ENCODE measurements at regions of chr6 and their contacts with region 1.

Region 1: DNA sequence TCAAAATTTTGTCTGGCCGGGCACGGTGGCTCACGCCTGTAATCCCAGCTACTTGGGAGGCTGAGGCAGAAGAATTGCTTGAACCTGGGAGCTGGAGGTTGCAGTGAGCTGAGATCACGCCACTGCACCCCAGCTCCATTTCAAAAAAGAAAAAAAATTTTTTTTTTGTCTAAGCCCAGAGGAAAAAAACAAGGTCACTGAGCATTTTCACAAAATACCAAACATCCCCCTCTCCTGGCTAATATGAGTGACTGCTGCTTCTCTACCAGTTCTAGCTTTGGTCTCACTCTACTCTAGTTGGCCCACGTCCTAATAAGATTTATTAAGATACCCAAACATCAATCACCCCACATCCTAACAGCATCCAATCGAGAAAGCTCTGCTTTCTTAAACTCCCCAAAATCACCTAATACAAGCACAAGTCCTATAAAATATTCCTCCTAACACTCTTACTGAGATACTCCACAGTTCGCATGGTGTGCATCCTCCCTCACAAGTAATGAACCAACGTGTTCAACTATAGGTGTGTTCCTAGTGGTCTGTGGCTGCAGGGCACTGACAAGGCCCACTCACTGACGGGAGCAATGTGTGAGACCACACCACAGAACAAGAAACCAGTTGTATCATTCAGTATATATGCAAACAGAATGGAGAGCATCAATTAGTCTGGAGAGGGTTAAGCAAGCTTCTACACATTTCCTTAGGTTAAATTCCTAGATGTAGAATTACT is 64.2 kb downstream of the FKBP5 start:
- DNase-seq: no peak
- H3K4me3 ChIP-seq: no peak overlapping the region
- H3K27ac ChIP-seq: peak overlapping the region in 2 of 4 donors; percentile 7 to 42
- H3K4me1 ChIP-seq: peaks cover 0 to 6% (median 0%) of the 10 kb centered on the region in 4 donors
- H3K27me3 ChIP-seq: no peaks in the 10 kb centered on the region
- CTCF ChIP-seq: no peak
- EP300 ChIP-seq: no peak
- POLR2A ChIP-seq: no peak

Region 2: GRCh38 chr6:35419417-35419816 is 205.1 kb before region 1 on chr6:
- intact Hi-C with region 1: no loop called
- DNase-seq: no peak
- H3K4me3 ChIP-seq: no peak overlapping the region
- H3K27ac ChIP-seq: no peak overlapping the region
- H3K4me1 ChIP-seq: peaks cover 0 to 12% (median 9%) of the 10 kb centered on the region in 4 donors
- H3K27me3 ChIP-seq: no peaks in the 10 kb centered on the region
- CTCF ChIP-seq: no peak
- EP300 ChIP-seq: no peak
- POLR2A ChIP-seq: no peak

Region 3: DNA sequence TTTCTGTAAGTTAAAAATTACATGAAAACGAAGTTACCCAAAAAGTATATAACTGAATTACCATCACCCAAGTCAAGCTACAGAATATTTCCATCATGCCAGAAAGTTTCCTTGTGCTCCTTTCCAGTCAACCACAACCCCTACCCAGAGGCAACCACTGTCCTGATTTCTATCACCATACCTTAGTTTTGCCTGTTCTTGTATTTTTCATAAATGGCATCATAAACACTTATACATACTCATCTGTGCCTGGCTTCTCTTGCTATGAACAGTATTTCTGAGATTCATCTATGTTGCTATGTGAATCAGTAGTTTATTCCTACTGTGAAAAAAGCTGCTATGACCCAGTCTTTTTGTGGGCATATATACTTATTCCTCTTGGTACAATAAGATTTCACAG is 56.8 kb after region 1 on chr6:
- intact Hi-C with region 1: loop called (anchors 5 kb)
- DNase-seq: no peak
- H3K4me3 ChIP-seq: no peak overlapping the region
- H3K27ac ChIP-seq: no peak overlapping the region
- H3K4me1 ChIP-seq: peaks cover 0 to 66% (median 56%) of the 10 kb centered on the region in 4 donors
- H3K27me3 ChIP-seq: no peaks in the 10 kb centered on the region
- CTCF ChIP-seq: no peak
- EP300 ChIP-seq: no peak
- POLR2A ChIP-seq: no peak

Region 4: GRCh38 chr6:35694462-35694861 is 70.0 kb after region 1 on chr6:
- intact Hi-C with region 1: no loop called
- DNase-seq: no peak
- H3K4me3 ChIP-seq: no peak overlapping the region
- H3K27ac ChIP-seq: no peak overlapping the region
- H3K4me1 ChIP-seq: peaks cover 0 to 26% (median 24%) of the 10 kb centered on the region in 4 donors
- H3K27me3 ChIP-seq: no peaks in the 10 kb centered on the region
- CTCF ChIP-seq: no peak
- EP300 ChIP-seq: no peak
- POLR2A ChIP-seq: no peak

Region 5: DNA sequence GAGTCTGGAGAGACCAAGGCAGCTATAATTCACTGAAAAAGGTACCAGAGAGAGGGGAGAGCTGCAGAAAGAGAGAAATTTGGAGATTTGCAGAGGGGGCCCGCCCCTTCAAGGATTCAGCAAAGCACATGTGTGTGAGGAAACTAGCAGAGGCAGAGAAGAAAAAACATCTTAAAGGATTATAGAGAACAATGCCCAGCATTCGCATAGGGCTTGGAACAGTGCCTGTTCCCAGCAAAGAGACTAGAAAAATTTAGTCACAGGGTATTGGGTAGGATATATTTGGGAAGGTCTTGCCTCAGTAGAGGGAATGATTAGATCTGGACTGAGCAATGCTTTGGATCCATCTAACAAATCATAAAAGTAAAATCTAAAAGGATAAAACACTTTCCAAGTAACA is 252.4 kb after region 1 on chr6:
- intact Hi-C with region 1: no loop called
- DNase-seq: no peak
- H3K4me3 ChIP-seq: no peak overlapping the region
- H3K27ac ChIP-seq: no peak overlapping the region
- H3K4me1 ChIP-seq: no peaks in the 10 kb centered on the region
- H3K27me3 ChIP-seq: no peaks in the 10 kb centered on the region
- CTCF ChIP-seq: no peak
- EP300 ChIP-seq: no peak
- POLR2A ChIP-seq: no peak

Measured in sigmoid colon (tissue), 7 donors.